ENCODE measurements at regions of chr6 and their contacts with region 1.

Region 1: DNA sequence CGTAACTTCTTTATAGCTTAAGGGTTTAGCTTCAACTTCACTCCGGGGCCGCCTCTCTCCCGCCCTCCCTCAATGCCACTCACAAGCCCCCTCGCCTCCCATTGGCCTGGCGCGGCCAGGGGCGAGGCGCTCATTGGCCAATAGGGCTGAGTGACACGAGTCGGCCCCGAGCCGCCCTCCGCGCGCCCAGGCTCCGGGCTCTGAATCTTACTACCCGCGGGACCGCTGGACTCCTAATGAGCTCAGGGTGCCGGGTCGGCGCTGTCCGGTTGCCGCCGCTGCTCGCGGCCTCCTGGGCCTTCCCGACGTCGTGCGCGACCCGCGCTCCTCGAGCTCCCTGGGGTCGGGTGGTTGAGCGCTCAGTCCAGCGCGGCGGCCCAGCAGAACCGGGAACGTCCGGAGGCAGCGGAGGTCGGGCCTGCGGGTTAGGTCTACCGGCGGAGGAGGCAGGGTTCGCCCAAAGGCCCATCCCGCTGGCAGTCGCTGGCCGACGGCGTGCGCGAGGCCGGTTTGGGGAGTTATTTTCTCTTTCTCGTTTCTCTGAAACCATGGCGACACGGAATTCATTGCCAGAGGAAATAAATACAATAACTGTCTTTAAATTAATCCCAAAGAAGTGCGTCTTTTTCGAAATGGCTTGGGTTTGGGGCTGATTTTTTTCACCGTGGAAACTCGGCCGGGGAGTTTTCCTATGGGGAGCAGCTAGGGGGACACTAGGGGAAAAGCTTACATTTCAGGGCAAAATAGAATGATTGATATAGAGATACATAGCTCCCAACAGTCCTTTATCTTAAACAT is at the start of gene SIM1:
- DNase-seq: peak; percentile 82
- H3K4me3 ChIP-seq: peak within 1 kb of the TSS; percentile 74
- H3K27me3 ChIP-seq: no peaks in the 10 kb centered on the region
- CTCF ChIP-seq: no peak
- polyA plus RNA-seq, gene SIM1: 27.1 and 32.9 TPM in 2 replicates

Region 2: GRCh38 chr6:100126790-100127484 is 338.2 kb before region 1 on chr6:
- CTCF ChIA-PET with region 1: interaction called, 19 read pairs
- POLR2A ChIA-PET with region 1: no interaction called
- DNase-seq: no peak
- H3K4me3 ChIP-seq: no peak overlapping the region
- H3K27me3 ChIP-seq: no peaks in the 10 kb centered on the region
- CTCF ChIP-seq: no peak

Region 3: GRCh38 chr6:100176311-100176950 is 288.7 kb before region 1 on chr6:
- CTCF ChIA-PET with region 1: interaction called, 47 read pairs
- POLR2A ChIA-PET with region 1: interaction called, 9 read pairs
- DNase-seq: peak; percentile 53
- H3K4me3 ChIP-seq: no peak overlapping the region; the same call in 1 of the 2 replicates
- H3K27me3 ChIP-seq: no peaks in the 10 kb centered on the region
- CTCF ChIP-seq: peak; percentile 59

Region 4: GRCh38 chr6:100446115-100447080 is 18.7 kb before region 1 on chr6:
- CTCF ChIA-PET with region 1: interaction called, 161 read pairs
- POLR2A ChIA-PET with region 1: interaction called, 3 read pairs
- DNase-seq: no peak
- H3K4me3 ChIP-seq: peak overlapping the region; percentile 39
- H3K27me3 ChIP-seq: no peaks in the 10 kb centered on the region
- CTCF ChIP-seq: no peak

Region 5: GRCh38 chr6:100504786-100505737 is 40.0 kb after region 1 on chr6:
- CTCF ChIA-PET with region 1: no interaction called
- POLR2A ChIA-PET with region 1: no interaction called
- DNase-seq: peak; percentile 66
- H3K4me3 ChIP-seq: no peak overlapping the region
- H3K27me3 ChIP-seq: no peaks in the 10 kb centered on the region
- CTCF ChIP-seq: no peak

Region 6: GRCh38 chr6:100664274-100665040 is 199.4 kb after region 1 on chr6:
- CTCF ChIA-PET with region 1: interaction called, 10 read pairs
- POLR2A ChIA-PET with region 1: interaction called, 5 read pairs
- DNase-seq: no peak
- H3K4me3 ChIP-seq: no peak overlapping the region
- H3K27me3 ChIP-seq: no peaks in the 10 kb centered on the region
- CTCF ChIP-seq: peak; percentile 59